H1 (cell line): ENCODE measurements at regions of chr13 and their contacts with region 1.

Region 1: DNA sequence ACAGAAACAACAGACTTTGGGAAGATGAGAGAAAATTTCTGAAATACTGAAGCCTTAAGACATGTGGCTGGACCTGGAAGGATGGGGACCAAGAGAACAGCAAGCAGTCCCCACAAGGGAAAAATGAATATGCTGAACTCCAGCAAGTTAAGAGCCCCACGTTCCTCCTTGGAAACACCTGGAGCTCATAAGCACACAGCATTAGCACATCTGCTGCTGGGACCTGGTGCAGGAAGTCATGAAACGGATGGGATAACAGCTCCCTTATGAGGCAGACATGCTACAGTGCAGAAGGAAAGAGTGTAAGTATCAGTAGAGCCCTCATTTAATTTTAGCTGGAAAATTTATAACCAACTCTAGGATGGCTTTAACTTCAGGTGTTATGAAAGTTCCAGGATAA is 67.3 kb downstream of the SLC15A1 start:
- DNase-seq: no peak
- H3K4me3 ChIP-seq: no peak overlapping the region
- H3K27ac ChIP-seq: no peak overlapping the region
- H3K4me1 ChIP-seq: peaks cover 0 to 14% (median 8%) of the 10 kb centered on the region in 4 experiments; a peak in 4 of 7 replicates
- H3K27me3 ChIP-seq: no peaks in the 10 kb centered on the region
- CTCF ChIP-seq: no peak
- EP300 ChIP-seq: no peak
- POLR2A ChIP-seq: no peak
- RAD21 ChIP-seq: peak; percentile 8 to 14; a peak in 1 of 4 replicates

Region 2: GRCh38 chr13:98659476-98659875 is 25.7 kb before region 1 on chr13:
- CTCF ChIA-PET with region 1: no interaction called
- POLR2A ChIA-PET with region 1: no interaction called
- DNase-seq: no peak
- H3K4me3 ChIP-seq: no peak overlapping the region
- H3K27ac ChIP-seq: no peak overlapping the region
- H3K4me1 ChIP-seq: no peaks in the 10 kb centered on the region
- H3K27me3 ChIP-seq: no peaks in the 10 kb centered on the region
- CTCF ChIP-seq: no peak
- EP300 ChIP-seq: no peak
- POLR2A ChIP-seq: no peak
- RAD21 ChIP-seq: no peak

Region 3: GRCh38 chr13:98672944-98673545 is 12.1 kb before region 1 on chr13:
- CTCF ChIA-PET with region 1: interaction called, 32 read pairs
- POLR2A ChIA-PET with region 1: interaction called, 4 read pairs
- DNase-seq: peak; percentile 15 to 76
- H3K4me3 ChIP-seq: peak overlapping the region in 3 of 4 experiments; percentile 5 to 34 (median 7); a peak in 2 of 8 replicates
- H3K27ac ChIP-seq: no peak overlapping the region
- H3K4me1 ChIP-seq: peaks cover 0 to 3% (median 1%) of the 10 kb centered on the region in 4 experiments; a peak in 2 of 7 replicates
- H3K27me3 ChIP-seq: no peaks in the 10 kb centered on the region
- CTCF ChIP-seq: peak; percentile 41 to 87 (median 68)
- EP300 ChIP-seq: no peak
- POLR2A ChIP-seq: no peak
- RAD21 ChIP-seq: peak; percentile 78 to 80

Region 4: GRCh38 chr13:98918771-98919170 is 233.6 kb after region 1 on chr13:
- CTCF ChIA-PET with region 1: no interaction called
- POLR2A ChIA-PET with region 1: no interaction called
- DNase-seq: no peak
- H3K4me3 ChIP-seq: no peak overlapping the region
- H3K27ac ChIP-seq: no peak overlapping the region
- H3K4me1 ChIP-seq: peaks cover 0 to 5% (median 2%) of the 10 kb centered on the region in 4 experiments; a peak in 3 of 7 replicates
- H3K27me3 ChIP-seq: no peaks in the 10 kb centered on the region
- CTCF ChIP-seq: no peak
- EP300 ChIP-seq: no peak
- POLR2A ChIP-seq: no peak
- RAD21 ChIP-seq: no peak